ENCODE measurements at regions of chr6 and their contacts with region 1.

Region 1: GRCh38 chr6:116387374-116387773 is 16.6 kb downstream of the DSE start:
- DNase-seq: peak; percentile 50
- H3K4me3 Mint-ChIP-seq: peak overlapping the region; percentile 24
- H3K27ac Mint-ChIP-seq: peak overlapping the region; percentile 81
- H3K4me1 Mint-ChIP-seq: peaks cover 45% of the 10 kb centered on the region
- H3K27me3 Mint-ChIP-seq: no peaks in the 10 kb centered on the region
- CTCF ChIP-seq: no peak

Region 2: DNA sequence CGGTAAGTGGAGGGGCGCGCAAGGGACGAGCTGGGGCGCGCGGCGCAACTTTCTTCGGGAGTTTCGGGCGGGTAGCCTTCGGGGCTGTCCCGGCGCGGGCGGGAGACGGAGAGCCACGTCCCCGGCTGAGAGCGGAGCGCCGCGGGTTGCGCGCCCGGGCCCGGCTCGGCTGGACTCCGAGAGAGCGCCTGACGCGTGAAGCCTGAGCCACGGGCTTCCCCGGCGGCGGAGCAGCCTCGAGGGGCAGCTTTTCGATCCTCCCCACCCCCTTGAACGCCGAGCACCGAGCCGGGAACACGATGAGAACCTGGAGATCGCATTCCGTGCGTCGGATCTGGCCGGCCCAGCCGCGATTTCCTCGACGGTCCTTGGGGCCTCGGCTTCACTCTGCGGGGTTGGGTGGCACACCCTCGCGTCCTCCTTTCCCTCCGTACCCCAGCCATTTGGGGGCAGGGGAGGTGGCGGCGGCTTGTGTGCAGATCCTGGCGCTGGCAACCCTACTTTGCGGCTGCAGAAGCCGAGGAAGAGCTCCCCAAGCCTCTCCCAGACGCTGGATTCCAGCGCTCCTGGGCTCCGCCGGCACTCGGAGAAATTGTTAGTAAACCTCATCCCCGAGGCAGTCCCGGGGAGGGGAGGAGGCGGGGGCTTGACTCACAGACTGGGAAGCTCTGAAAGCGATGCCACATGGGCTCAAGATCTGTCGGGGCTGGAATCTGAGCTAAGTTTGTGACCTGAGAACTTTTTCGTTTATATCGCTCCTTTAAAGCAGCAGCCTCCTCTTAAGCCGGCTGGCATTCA is 16.1 kb before region 1 on chr6:
- CTCF ChIA-PET with region 1: interaction called, 4 read pairs
- intact Hi-C with region 1: loop called (anchors 2 kb)
- DNase-seq: peak; percentile 69
- H3K4me3 Mint-ChIP-seq: peak overlapping the region; percentile 84
- H3K27ac Mint-ChIP-seq: peak overlapping the region; percentile 42
- H3K4me1 Mint-ChIP-seq: peaks cover 21% of the 10 kb centered on the region
- H3K27me3 Mint-ChIP-seq: no peaks in the 10 kb centered on the region
- CTCF ChIP-seq: no peak

Measured in Calu3 (cell line).